Left cardiac atrium (tissue), 4 donors: ENCODE measurements at regions of chr5 and their contacts with region 1.

Region 1: DNA sequence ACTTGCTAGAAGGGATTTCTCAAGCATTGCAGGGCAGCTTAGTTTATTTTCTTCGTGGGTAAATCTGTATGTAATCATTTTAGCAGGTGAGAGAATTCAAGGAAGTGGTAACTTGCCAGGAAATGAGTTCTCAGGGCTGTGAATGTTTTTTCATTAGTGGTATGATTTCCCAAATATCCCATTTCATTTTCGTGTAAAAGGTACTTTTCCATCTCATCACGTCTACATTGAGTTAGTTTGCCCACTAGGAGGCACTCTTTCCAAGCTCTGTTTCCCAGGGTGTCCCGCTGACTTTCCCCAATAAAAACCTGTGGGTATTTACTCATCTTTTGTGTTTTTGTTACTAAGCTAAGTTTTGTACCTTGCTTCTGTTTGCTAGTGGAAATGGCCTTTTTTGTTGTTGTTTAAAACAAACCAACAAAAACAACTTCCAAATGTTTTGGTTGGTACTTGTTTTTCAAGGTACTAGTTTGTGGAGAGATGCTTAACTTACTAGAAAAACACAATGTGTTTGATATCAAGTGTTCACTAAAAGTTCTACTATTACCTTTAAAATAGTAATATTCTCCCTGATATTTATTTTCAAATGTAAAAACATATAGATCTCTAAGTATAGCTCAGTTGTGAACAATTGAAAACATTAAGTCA is 373.6 kb downstream of the ADGRV1 start:
- DNase-seq: peak; percentile 24
- ATAC-seq: peak; percentile 78 to 82

Region 2: GRCh38 chr5:90866333-90866732 is 65.8 kb before region 1 on chr5:
- intact Hi-C with region 1: loop called in 1 of 2 experiments (anchors 2 kb)
- DNase-seq: no peak
- ATAC-seq: peak in 1 of 2 donors; percentile 39

Region 3: GRCh38 chr5:91016954-91017700 is 85.0 kb after region 1 on chr5:
- intact Hi-C with region 1: no loop called
- DNase-seq: no peak
- ATAC-seq: peak; percentile 78 to 80

Region 4: DNA sequence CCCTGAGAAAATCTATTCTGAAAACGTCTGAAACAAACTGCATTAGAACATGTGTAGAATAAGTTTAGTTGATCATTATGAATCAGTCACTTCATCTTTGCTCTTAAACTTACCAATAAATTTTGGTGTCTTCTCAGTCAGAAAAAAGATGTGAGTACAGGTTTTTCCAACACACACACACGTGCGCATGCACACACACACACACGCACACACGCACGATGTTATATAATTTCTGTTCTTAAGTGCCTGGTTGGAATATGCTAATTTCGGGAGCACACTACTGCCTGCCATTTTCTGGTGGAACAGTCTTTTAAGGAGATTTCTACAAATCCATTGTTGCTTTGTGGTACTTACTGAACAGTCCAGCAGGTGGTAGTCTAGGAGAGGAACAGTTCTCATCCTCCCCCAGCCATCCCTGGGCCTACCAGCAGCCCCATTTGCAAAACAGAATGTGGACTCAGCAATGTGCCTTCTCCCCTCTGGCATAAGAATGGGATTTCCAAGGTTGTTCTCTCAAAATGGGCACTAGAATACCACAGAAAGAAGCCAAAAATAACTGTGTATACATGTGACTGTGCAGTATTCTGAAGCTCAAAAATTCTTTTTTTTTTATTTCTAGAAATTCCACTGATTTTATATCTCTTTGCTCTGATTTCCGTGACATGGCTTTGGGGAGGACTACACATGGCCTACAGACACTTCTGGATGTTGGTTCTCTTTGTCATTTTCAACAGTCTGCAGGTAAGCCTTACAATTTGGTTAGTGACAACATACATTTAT is 169.6 kb after region 1 on chr5:
- intact Hi-C with region 1: loop called (anchors 5 to 10 kb)
- DNase-seq: peak; percentile 72
- ATAC-seq: peak; percentile 96 to 98

Region 5: DNA sequence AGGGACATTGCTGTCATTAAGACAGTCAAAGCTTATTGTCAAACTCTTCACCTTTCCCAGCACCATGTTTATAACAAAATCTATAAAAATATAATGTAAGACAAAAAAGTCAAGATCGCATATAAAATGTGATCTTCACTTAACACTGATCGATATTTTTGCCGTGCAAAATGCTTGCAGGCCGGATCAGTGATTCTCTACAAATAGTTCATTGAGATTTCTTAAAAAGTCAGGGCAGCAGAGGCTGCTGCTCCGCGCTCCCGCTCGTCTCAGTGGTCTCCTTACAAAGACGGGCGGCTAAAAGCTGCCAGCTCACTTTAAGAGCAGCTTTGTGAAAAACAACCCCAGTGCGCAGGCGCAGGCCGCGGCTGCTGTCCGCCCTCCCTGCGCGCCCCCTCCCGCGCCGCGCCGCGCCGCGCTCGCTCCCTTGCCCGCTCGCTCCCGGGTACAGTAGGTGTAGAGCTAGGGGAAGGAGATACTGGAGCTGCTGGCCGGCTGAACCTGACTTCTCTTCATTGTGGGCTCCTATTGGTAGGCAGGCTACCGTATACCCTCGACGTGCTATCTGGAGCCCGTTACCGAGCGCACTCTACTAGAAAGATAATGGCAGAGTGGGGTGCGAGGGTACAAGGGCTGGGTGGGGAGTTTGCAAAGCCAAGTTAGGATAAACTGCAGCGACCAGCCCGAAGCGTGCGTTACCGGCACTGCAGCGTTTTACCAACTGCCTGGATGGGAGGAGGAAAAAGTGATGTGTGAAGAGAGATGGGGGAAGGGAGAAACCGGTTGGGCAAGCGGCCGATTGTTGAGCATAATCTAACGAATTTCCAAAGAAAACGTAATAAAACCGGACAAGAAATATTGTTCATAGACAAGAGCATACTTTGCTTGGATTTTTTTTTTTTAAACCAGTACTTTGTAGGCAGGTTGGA is 451.1 kb after region 1 on chr5 and contains the start of gene ARRDC3:
- intact Hi-C with region 1: loop called in 1 of 2 experiments (anchors 10 kb)
- DNase-seq: peak; percentile 96
- ATAC-seq: peak; percentile 73 to 83
- total RNA-seq, gene ARRDC3: 18.9 to 23.7 TPM

Region 6: GRCh38 chr5:91397791-91398190 is 465.6 kb after region 1 on chr5:
- intact Hi-C with region 1: loop called in 1 of 2 experiments (anchors 10 kb)
- DNase-seq: no peak
- ATAC-seq: no peak

Region 7: GRCh38 chr5:91419571-91420537 is 487.7 kb after region 1 on chr5:
- intact Hi-C with region 1: loop called in 1 of 2 experiments (anchors 5 kb)
- DNase-seq: peak; percentile 59
- ATAC-seq: peak in 1 of 2 donors; percentile 35